Heart right ventricle (tissue), 16 donors: ENCODE measurements at regions of chr1 and their contacts with region 1.

Region 1: DNA sequence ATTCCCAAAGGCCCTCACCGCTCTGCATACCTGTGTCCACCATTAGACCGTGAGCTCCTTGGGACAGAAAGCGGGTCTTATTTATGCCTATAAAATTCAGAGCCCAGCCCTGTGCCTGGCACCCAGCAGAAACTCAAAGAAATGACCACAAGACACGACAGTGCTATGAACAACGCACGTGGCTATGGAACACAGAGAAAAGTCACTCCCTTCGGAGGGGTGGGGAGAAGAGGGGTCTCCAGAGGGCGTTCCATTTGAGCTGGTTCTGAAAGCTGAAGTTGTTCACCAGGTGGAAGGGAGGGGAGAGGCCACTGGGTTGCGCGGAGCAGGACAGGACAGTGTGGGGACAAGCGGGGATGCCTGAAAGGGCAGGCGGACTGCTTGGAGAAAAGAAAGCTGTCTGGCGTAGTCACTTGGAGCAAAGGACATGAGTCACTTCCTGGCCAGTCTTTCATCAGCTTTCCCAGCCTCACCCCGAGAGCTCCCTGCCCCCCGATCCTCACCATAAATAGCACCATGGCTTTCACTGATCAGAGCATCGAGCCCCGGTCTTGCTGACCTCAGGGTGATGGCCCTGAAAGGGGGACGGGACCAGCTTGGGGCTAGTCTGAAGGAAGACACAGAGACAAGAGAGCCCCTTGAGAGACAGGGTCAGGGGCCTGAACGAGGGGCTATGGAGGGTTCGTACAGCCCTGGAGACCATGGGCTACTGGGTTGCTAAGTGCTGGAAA is 28.5 kb downstream of the ECE1 start:
- DNase-seq: peak; percentile 71 to 93
- ATAC-seq: peak; percentile 83 to 91 (median 88)
- H3K4me3 ChIP-seq: peak overlapping the region in 8 of 10 donors; percentile 1 to 36 (median 12)
- H3K27ac ChIP-seq: peak overlapping the region; percentile 92 to 98 (median 96)
- H3K4me1 ChIP-seq: peaks cover 33 to 75% (median 56%) of the 10 kb centered on the region in 9 donors
- H3K27me3 ChIP-seq: no peaks in the 10 kb centered on the region
- CTCF ChIP-seq: no peak

Region 2: DNA sequence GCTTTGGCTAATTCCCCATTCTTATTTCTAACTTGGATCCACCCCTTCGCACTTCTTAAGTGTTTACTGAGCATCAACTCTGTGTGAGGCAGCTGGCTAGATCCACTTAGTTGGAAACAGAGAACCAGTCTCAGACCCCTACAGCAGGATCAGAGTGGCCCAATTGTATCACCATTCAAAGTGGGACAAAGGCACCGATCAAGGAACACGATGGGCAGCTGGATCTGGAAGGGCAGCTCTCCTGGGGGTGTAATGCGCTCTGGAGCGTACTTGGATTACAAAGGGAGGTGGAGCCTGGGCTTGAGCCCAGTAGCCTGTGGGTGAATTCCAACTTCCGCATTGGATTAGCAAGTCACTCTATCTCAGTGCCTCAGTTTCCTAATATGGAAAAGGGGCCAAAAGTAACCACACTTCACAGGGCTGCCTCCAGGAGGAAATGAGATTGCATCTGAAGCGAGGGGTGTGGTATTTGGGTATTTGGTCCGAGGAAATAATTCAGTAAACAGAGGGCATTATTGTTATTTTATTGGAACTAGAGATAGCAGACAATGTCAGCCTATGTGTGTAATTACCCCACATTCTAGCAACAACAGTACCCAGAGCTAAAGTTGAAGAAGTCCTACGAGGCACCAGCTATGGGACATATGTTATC is 16.6 kb after region 1 on chr1:
- intact Hi-C with region 1: loop called in 1 of 10 experiments (anchors 1 kb)
- DNase-seq: peak; percentile 50 to 71
- ATAC-seq: peak; percentile 49 to 62 (median 54)
- H3K4me3 ChIP-seq: peak overlapping the region in 6 of 10 donors; percentile 34 to 46 (median 40)
- H3K27ac ChIP-seq: peak overlapping the region; percentile 80 to 97 (median 92)
- H3K4me1 ChIP-seq: peaks cover 31 to 90% (median 78%) of the 10 kb centered on the region in 9 donors
- H3K27me3 ChIP-seq: no peaks in the 10 kb centered on the region
- CTCF ChIP-seq: no peak

Region 3: GRCh38 chr1:21295002-21295401 is 33.3 kb after region 1 on chr1:
- intact Hi-C with region 1: loop called in 1 of 10 experiments (anchors 5 kb)
- DNase-seq: no peak
- ATAC-seq: no peak
- H3K4me3 ChIP-seq: no peak overlapping the region
- H3K27ac ChIP-seq: peak overlapping the region in 8 of 10 donors; percentile 65 to 92 (median 79)
- H3K4me1 ChIP-seq: peaks cover 7 to 92% (median 43%) of the 10 kb centered on the region in 9 donors
- H3K27me3 ChIP-seq: no peaks in the 10 kb centered on the region
- CTCF ChIP-seq: no peak

Region 4: DNA sequence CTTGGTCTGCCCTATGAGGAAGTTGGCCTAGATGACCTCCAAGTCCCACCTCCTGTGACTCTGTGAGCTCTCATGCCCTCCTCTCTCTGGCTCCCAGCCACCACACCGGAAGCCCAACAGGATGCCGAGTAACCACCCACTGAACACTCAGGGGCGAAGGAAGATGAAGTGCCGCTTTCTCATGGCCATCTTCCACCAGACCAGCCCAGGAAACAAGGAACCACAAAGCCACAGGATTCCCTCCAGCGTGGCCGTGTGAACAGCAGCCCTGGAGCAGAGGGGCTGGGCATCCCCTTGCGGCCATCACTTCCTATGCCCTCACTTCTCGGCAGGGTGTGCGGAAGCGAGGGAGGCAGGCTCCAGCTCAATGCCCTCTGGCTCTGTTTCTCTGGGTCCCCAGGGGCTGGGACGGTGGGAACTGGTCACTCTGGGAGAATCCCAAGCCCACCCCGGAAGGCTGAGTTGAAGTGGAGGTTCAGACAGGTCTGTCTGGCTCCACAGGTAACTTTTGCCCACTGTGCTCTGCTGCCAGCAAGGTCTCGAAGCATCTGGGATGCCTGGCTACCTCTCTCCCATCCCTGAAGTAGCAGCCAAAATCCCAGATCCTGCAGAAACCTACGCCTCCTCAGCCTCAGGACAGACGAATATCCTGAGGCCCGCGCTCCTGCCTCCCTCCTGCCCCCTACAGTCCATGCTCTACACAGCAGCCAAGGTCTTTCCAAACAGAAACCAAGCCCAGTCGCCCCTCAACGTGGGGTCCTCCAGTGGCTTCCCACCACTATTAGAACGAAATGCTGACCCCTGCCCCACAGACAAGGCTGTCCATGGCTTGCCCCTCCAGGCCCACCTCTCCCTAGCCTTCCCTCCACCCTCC is 72.7 kb after region 1 on chr1:
- intact Hi-C with region 1: loop called in 3 of 10 experiments (anchors 2 to 5 kb)
- DNase-seq: peak; percentile 68 to 78
- ATAC-seq: peak; percentile 31 to 69 (median 53)
- H3K4me3 ChIP-seq: peak overlapping the region in 9 of 10 donors; percentile 4 to 41 (median 36)
- H3K27ac ChIP-seq: peak overlapping the region; percentile 47 to 90 (median 84)
- H3K4me1 ChIP-seq: peaks cover 42 to 97% (median 78%) of the 10 kb centered on the region in 9 donors
- H3K27me3 ChIP-seq: no peaks in the 10 kb centered on the region
- CTCF ChIP-seq: peak; percentile 60 to 90 (median 85)

Region 5: DNA sequence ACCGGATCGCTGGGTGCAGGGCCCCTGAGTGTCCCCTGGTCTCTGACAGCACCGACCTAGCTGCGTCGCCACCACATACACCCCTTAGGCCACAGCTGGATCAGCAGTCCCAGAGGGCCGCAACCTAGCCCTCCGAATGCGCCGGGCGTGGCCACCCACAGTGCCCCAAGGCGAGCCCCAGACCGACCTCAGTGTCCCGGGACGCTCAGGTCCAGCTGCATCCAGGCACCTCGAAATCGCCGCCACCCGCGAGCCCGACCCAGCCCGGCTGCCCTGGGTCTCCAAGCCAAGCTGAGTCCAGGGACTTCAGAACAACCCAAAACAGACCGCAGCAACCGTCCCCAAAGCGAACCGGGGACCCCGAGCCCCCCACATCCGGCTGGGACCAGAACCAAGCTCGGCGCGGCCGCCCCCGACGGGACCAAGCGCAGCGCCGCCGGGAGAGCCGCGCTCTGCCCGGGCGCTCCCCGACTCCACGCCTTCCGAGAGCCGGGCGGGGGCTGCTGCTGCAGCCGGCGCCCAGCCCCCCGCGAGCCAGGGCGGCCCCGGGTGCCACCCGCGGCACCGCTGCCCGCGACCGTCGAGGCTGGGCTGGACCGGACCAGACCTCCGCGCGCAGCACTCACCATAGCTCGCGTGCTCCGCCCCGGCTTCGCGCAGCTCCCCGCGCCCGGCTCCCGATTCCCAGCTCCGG is 83.2 kb after region 1 on chr1:
- intact Hi-C with region 1: loop called in 5 of 10 experiments (anchors 5 kb)
- DNase-seq: no peak
- ATAC-seq: peak in 7 of 8 donors; percentile 7 to 48 (median 23)
- H3K4me3 ChIP-seq: peak overlapping the region; percentile 70 to 93 (median 78)
- H3K27ac ChIP-seq: peak overlapping the region; percentile 44 to 92 (median 88)
- H3K4me1 ChIP-seq: peaks cover 15 to 58% (median 46%) of the 10 kb centered on the region in 9 donors
- H3K27me3 ChIP-seq: peaks cover 0 to 37% (median 0%) of the 10 kb centered on the region in 7 donors
- CTCF ChIP-seq: no peak